ENCODE measurements at regions of chr14 and their contacts with region 1.

Region 1: DNA sequence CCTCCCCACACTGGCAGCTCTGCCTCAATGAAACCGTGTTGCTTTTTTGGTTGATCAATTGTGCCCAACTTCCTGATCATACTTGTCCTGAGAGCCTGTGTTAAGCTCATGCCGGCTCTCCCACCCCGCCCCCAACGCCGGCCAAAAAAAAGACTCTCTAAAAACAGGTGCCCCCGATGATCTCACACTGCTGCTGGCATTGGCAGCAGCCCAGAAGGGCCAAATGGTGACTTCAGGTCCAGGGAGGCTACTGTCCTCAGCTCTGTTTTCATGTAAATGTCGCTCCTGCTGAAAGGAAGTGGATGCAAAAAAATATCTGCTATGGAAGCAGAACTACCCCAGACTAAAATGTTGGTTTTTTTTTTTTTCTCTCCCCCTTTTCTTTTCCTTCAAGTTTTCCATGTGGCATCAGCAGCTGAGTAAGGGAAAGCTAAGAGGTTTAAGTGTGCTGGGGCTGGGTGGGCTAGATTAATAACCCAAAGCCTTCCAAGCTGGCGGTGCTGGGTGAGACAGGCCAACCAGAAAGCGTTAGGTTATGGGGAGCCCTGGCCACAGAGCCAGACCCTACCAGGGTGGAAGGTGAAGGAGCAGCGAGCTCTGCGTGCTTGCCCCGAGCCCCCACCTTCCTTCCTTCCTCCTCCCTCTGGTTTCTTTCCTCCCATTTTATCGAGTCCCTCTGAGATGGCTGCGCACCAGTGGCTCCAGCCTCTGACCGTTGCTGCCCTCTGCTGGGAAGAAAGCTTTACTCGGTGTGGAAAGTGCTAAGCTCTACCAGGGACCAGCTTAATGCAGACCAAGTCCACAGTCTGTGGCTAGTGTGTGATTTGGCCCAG is 396.1 kb downstream of the NRXN3 start:
- DNase-seq: peak; percentile 90
- ATAC-seq: peak; percentile 95
- H3K4me3 Mint-ChIP-seq: peak overlapping the region; percentile 42
- H3K27ac Mint-ChIP-seq: no peak overlapping the region
- H3K4me1 Mint-ChIP-seq: peaks cover 11% of the 10 kb centered on the region
- H3K27me3 Mint-ChIP-seq: no peaks in the 10 kb centered on the region
- CTCF ChIP-seq: peak; percentile 43; the same call in 1 of the 2 replicates

Region 2: DNA sequence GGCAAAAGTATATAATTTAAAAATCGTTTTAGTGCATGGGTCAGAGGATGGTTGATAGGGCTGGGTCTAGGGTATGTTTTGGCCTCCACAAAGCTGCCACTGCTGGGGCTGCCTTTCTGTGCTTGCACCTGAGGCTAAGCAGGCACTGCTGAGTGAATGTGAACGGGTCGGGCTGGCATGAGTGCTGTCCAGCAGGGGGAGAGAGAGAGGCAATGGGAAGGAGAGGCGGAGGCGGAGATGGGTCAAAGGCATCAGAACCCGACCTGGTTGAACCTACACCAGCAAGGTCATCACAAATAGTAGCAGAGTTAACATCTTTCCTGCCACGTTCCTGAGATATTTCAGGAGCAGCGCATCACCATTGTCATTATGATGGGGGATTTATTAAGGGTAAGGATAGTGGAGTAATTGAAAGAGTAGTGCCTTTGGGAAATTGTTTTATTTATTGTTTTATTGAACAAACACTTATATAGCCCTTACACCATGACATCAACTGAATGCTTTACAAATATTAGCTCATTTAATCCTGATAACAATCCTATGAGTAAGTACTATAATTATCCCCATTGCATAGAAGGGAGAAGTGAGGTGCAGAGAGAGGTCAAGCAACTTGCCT is 401.9 kb before region 1 on chr14:
- CTCF ChIA-PET with region 1: interaction called, 22 read pairs
- POLR2A ChIA-PET with region 1: interaction called, 3 read pairs
- DNase-seq: peak; percentile 83
- ATAC-seq: peak; percentile 99
- H3K4me3 Mint-ChIP-seq: no peak overlapping the region
- H3K27ac Mint-ChIP-seq: no peak overlapping the region
- H3K4me1 Mint-ChIP-seq: peaks cover 9% of the 10 kb centered on the region
- H3K27me3 Mint-ChIP-seq: no peaks in the 10 kb centered on the region; the same call in 1 of the 2 replicates
- CTCF ChIP-seq: peak; percentile 74

Region 3: DNA sequence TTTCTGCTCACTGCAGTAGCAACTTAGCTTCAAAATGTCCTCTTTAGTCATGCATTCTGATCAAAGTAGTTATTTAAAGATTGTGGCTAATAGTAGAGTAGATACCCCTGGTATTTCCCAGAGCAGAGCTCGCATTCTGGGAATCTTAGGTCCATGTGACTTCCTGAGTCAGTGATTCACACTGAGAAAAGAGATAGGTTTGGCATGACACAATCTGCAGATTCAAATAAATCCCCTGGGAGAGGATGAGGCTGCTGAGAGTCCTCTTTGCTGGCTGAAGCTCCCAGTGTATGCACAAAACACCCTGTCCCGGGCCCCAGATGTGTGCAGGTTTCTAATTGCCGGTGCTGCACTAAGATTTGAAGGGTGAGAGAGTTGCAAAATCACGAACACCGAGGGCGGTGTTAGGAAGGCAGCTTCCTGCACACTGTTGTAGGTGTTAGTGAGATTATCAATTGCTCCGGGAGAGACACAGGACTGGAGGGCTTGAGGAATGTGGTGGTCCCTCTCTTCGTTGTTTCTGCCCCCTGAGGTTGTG is 162.9 kb before region 1 on chr14:
- CTCF ChIA-PET with region 1: interaction called, 11 read pairs
- POLR2A ChIA-PET with region 1: no interaction called
- DNase-seq: no peak
- ATAC-seq: peak; percentile 83
- H3K4me3 Mint-ChIP-seq: no peak overlapping the region; the same call in 1 of the 2 replicates
- H3K27ac Mint-ChIP-seq: peak overlapping the region; percentile 51; the same call in 1 of the 2 replicates
- H3K4me1 Mint-ChIP-seq: peaks cover 19% of the 10 kb centered on the region
- H3K27me3 Mint-ChIP-seq: no peaks in the 10 kb centered on the region; the same call in 1 of the 2 replicates
- CTCF ChIP-seq: no peak

Region 4: DNA sequence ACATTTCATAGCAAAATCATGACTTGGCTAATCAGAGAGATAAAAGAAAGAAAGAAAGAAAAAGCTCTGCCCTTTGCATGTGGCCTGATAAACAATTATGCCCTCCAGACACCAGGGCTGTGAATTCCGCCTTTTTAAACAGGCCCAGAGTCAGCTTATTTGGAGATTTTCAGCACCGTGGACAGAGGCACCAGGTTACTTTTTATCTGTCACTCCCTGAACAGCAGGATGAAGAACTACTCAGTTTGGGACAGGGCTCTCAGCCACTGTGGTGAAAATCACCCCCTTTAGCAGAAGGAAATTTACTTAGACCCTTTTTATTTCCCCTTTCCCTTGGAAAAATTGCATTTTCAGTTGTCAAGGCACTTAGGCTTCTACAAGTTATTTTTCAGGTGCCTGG is 36.2 kb before region 1 on chr14:
- CTCF ChIA-PET with region 1: interaction called, 10 read pairs
- POLR2A ChIA-PET with region 1: no interaction called
- DNase-seq: peak; percentile 69
- ATAC-seq: peak; percentile 88
- H3K4me3 Mint-ChIP-seq: no peak overlapping the region
- H3K27ac Mint-ChIP-seq: no peak overlapping the region
- H3K4me1 Mint-ChIP-seq: no peaks in the 10 kb centered on the region
- H3K27me3 Mint-ChIP-seq: no peaks in the 10 kb centered on the region; the same call in 1 of the 2 replicates
- CTCF ChIP-seq: no peak

Region 5: DNA sequence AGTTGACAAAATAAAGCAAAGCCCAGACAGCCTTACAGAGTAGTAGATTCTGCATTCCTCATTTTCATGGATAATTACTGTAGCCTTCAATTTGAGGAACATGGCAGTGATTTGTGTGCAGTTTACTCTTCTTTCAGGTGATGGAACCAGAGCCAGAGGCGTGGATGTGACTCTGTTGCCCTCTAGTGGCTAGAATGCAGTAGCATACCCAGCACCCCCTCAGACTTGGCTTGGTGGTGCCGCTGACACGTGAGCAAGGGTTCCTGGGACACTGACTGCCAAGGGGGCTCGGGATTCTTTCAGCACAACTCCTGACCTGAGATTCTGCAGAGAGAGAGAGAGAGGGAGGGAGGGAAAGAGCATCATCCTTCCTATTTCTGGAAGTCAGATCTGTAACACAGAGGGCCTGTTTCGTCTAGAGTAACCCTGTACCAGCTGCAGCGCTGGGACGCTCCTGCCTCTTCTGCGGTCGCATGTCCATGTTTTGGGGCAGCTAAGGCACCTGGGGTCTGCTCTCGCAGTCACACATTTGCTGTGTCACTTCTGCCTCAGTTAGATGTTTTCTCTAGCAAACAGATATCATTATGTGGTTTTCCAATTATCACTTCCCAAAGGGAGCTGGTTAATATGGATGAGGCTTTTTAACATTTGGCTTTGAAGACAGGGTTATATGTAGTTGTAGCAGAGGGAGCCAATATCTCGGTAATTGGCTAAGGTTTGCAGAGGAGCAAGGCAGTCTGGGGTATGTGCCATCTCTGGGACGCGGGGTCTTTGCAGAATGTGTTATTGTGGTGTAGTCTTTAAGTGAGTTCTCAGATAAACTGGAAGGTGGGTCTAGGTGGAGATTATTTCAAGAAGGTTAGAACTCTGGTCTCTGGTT is 32.0 kb after region 1 on chr14:
- CTCF ChIA-PET with region 1: interaction called, 25 read pairs
- POLR2A ChIA-PET with region 1: no interaction called
- DNase-seq: peak; percentile 74
- ATAC-seq: peak; percentile 99
- H3K4me3 Mint-ChIP-seq: peak overlapping the region; percentile 35; the same call in 1 of the 2 replicates
- H3K27ac Mint-ChIP-seq: no peak overlapping the region
- H3K4me1 Mint-ChIP-seq: peaks cover 6% of the 10 kb centered on the region; the same call in 1 of the 2 replicates
- H3K27me3 Mint-ChIP-seq: peaks cover 10% of the 10 kb centered on the region; the same call in 1 of the 2 replicates
- CTCF ChIP-seq: peak; percentile 95

Region 6: GRCh38 chr14:78746086-78746595 is 179.9 kb after region 1 on chr14:
- CTCF ChIA-PET with region 1: no interaction called
- POLR2A ChIA-PET with region 1: no interaction called
- DNase-seq: no peak
- ATAC-seq: no peak
- H3K4me3 Mint-ChIP-seq: no peak overlapping the region
- H3K27ac Mint-ChIP-seq: no peak overlapping the region
- H3K4me1 Mint-ChIP-seq: peaks cover 4% of the 10 kb centered on the region; the same call in 1 of the 2 replicates
- H3K27me3 Mint-ChIP-seq: no peaks in the 10 kb centered on the region
- CTCF ChIP-seq: no peak

Region 7: DNA sequence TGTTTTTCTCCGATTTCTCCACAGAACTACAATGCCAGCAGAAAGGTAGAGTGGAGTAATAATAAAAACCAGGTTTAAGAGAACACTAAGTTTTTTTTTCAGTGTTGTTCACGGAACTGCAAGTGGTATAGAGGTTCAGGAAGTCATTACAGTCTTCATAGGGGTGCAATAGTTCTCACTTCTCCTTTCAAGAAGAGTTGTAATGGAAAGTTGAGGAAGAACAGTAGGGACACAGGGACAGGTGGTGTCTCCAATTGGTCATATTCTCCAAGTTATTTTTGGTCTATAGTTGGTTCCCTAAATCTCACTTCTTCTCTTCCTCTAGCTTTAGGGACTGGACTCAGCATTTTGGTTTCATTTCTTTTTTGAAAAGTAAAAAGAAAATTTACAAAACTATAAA is 498.0 kb after region 1 on chr14:
- CTCF ChIA-PET with region 1: no interaction called
- POLR2A ChIA-PET with region 1: no interaction called
- DNase-seq: no peak
- ATAC-seq: no peak
- H3K4me3 Mint-ChIP-seq: no peak overlapping the region
- H3K27ac Mint-ChIP-seq: no peak overlapping the region
- H3K4me1 Mint-ChIP-seq: 0 out of 2 replicates have a peak, but pooled peaks cover 3% of the 10 kb centered on the region
- H3K27me3 Mint-ChIP-seq: no peaks in the 10 kb centered on the region; the same call in 1 of the 2 replicates
- CTCF ChIP-seq: no peak

Measured in WTC11 (cell line).